ENCODE measurements at regions of chr20 and their contacts with region 1.

Region 1: DNA sequence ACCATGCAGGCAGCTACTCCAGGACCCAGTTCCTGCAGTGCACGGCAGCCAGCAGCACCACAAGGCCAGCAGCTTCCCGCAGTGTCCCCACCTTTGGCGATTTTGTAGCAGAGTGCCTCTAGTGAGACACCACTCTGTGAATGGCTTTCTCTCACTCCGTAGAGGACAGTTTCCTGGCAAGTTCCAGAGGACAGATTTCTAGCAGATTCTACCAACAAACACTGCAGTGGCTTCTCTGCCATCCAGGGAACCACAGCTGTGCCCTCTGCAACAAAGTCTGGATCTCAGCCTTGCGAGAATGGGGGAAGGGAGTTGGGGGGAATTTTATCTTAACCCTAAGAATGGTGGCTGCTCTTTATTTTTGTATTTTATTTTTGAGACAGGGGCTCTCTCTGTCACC is 28.7 kb downstream of the SNHG17 start:
- DNase-seq: no peak
- ATAC-seq: no peak
- H3K4me3 ChIP-seq: no peak overlapping the region
- H3K27ac ChIP-seq: no peak overlapping the region
- H3K4me1 ChIP-seq: no peaks in the 10 kb centered on the region
- H3K27me3 ChIP-seq: no peaks in the 10 kb centered on the region
- CTCF ChIP-seq: no peak

Region 2: DNA sequence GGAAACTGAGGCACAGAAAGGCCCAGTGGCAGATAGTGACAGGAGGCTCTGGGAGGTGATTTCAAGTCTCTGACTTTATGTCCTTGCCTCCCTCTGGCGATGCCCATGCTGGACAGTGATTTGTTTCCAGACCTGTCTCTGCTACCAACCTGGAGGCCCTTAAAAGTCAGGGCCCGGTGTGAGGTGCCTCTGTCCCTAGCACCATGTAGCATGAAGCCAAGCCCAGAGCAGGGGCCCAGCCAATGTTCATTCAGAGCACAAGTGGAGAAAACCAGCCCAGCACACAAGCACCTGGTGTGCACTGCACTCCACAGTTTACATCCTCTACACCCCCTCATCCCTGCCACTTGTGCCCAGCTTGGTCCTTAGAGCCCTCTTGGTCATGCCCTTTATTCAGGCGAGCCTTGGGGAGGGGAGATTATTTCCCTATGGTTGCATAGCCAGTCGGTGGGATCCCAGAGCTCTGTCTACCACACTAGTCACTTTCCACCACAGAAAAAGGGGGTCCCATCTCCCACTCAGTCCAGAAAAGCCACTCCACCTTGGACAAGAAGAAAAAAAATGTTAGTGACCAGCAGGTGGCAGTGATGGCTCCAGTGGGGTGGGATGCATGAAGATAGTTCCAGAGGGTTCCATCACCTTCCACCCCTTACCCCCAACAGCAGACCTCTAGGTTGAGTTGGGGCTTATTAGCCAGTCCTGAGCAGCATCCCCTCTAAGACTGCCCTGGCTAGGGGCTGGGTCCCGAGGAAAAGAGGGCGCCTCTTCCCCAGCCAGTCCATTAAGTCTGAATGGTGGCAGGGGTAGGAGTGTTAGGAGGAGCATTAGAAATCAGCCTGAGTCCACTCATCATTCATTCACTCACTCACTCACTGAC is 176.9 kb before region 1 on chr20:
- intact Hi-C with region 1: loop called (anchors 5 kb)
- DNase-seq: no peak
- ATAC-seq: peak; percentile 31
- H3K4me3 ChIP-seq: no peak overlapping the region
- H3K27ac ChIP-seq: no peak overlapping the region
- H3K4me1 ChIP-seq: no peaks in the 10 kb centered on the region
- H3K27me3 ChIP-seq: no peaks in the 10 kb centered on the region
- CTCF ChIP-seq: peak; percentile 48

Region 3: GRCh38 chr20:38338849-38339520 is 67.5 kb before region 1 on chr20:
- intact Hi-C with region 1: no loop called
- DNase-seq: no peak
- ATAC-seq: no peak
- H3K4me3 ChIP-seq: no peak overlapping the region
- H3K27ac ChIP-seq: no peak overlapping the region
- H3K4me1 ChIP-seq: no peaks in the 10 kb centered on the region
- H3K27me3 ChIP-seq: no peaks in the 10 kb centered on the region
- CTCF ChIP-seq: no peak

Measured in upper lobe of right lung (tissue), 1 donor.